ENCODE measurements at regions of chr19 and their contacts with region 1.

Region 1: GRCh38 chr19:48795055-48795684 is 15.7 kb downstream of the BCAT2 start:
- DNase-seq: peak; percentile 91
- H3K4me3 Mint-ChIP-seq: peak overlapping the region; percentile 80
- H3K27ac Mint-ChIP-seq: peak overlapping the region; percentile 6
- H3K4me1 Mint-ChIP-seq: peaks cover 15% of the 10 kb centered on the region
- H3K27me3 Mint-ChIP-seq: no peaks in the 10 kb centered on the region
- CTCF ChIP-seq: peak; percentile 99

Region 2: GRCh38 chr19:48806818-48807589 is 11.8 kb after region 1 on chr19:
- CTCF ChIA-PET with region 1: interaction called, 20 read pairs
- intact Hi-C with region 1: no loop called
- DNase-seq: no peak
- H3K4me3 Mint-ChIP-seq: no peak overlapping the region
- H3K27ac Mint-ChIP-seq: no peak overlapping the region
- H3K4me1 Mint-ChIP-seq: peaks cover 22% of the 10 kb centered on the region
- H3K27me3 Mint-ChIP-seq: no peaks in the 10 kb centered on the region
- CTCF ChIP-seq: no peak

Region 3: DNA sequence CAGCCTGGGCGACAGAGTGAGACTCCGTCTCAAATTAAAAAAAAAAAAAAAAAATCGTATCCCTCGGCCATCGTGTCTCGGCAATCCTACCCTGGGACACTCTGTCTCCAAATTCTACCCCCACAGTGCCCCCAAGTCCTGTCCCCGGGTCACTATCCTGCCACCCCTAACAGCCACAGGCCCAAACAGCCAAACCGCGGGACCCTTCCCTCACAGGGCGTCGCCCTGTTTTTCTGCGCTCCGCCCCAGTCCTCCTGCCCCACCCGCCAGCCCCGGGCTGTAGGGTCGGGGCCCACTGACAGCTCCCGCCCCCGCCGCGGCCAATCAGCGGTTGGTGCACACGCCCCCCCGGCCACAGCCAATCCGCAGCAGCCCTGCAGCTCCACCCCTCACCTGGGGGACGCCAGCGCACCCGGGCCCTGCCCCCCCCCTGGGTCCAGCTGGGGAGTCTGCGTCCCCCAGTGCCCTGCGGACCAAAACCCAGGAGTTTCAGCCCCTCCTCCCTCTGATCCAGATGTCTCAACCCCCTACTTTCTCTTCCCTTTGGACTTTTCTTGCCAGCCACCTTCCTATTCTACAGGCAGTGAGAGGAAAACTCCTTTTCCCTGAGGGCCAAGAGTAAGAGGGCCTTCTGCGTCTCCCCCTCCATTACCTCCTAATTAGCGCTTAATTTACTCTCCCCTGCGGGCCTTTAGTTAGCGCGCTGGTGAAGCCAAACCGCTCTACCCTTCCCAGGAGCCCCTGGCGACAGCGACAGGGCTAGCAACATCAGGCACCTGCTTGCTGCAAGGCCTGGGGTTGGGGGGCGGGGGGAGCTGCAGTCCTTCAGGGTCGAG is 17.1 kb after region 1 on chr19:
- CTCF ChIA-PET with region 1: interaction called, 20 read pairs
- intact Hi-C with region 1: no loop called
- DNase-seq: peak; percentile 93
- H3K4me3 Mint-ChIP-seq: peak overlapping the region; percentile 89
- H3K27ac Mint-ChIP-seq: peak overlapping the region; percentile 64
- H3K4me1 Mint-ChIP-seq: peaks cover 22% of the 10 kb centered on the region
- H3K27me3 Mint-ChIP-seq: no peaks in the 10 kb centered on the region
- CTCF ChIP-seq: no peak

Region 4: DNA sequence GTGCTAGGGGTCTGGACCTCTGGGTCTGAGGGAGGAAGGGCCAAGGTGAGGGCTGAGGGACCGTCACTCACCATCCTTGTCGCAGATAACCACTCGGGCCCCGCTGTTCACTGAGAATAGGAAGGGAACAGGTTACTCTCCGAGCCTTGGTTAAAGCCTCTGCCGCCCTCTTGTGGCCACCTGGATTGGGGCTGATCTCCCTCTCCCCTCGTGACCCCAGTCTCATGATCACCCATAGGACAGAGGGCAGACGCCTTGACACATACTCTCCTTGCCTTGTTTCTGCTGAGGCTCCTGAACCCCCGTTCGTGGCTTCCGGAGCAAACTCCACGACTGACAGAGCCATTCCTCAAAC is 40.5 kb after region 1 on chr19:
- CTCF ChIA-PET with region 1: interaction called, 11 read pairs
- intact Hi-C with region 1: loop called (anchors 1 kb)
- DNase-seq: peak; percentile 94
- H3K4me3 Mint-ChIP-seq: no peak overlapping the region
- H3K27ac Mint-ChIP-seq: no peak overlapping the region
- H3K4me1 Mint-ChIP-seq: peaks cover 11% of the 10 kb centered on the region
- H3K27me3 Mint-ChIP-seq: no peaks in the 10 kb centered on the region
- CTCF ChIP-seq: peak; percentile 90

Region 5: DNA sequence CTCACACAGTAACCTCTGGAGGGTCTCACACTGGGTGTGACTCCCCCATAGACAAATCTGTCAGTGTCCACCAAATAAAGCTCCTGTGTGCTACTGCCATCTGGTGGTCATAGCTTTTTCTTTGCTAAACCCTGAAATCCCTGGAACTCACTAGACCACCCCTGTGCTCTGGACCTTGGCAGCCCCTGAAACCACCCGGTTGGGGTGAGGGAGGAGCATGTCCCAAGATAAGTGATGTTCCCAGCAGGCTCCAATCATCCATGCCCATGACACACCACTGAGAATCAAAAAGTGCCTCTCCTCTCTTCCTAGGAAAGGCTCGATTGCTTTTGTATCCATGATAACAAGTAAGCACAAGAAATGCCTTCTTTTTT is 47.6 kb after region 1 on chr19:
- CTCF ChIA-PET with region 1: interaction called, 20 read pairs
- intact Hi-C with region 1: no loop called
- DNase-seq: peak; percentile 67
- H3K4me3 Mint-ChIP-seq: no peak overlapping the region
- H3K27ac Mint-ChIP-seq: peak overlapping the region; percentile 3
- H3K4me1 Mint-ChIP-seq: no peaks in the 10 kb centered on the region
- H3K27me3 Mint-ChIP-seq: no peaks in the 10 kb centered on the region
- CTCF ChIP-seq: peak; percentile 82

Region 6: GRCh38 chr19:48970923-48971395 is 175.8 kb after region 1 on chr19:
- CTCF ChIA-PET with region 1: interaction called, 17 read pairs
- intact Hi-C with region 1: loop called (anchors 2 kb)
- DNase-seq: peak; percentile 85
- H3K4me3 Mint-ChIP-seq: no peak overlapping the region
- H3K27ac Mint-ChIP-seq: no peak overlapping the region
- H3K4me1 Mint-ChIP-seq: no peaks in the 10 kb centered on the region
- H3K27me3 Mint-ChIP-seq: no peaks in the 10 kb centered on the region
- CTCF ChIP-seq: peak; percentile 95

Measured in Calu3 (cell line).